Endothelial cell of umbilical vein (primary cell): ENCODE measurements at regions of chr7 and their contacts with region 1.

Region 1: DNA sequence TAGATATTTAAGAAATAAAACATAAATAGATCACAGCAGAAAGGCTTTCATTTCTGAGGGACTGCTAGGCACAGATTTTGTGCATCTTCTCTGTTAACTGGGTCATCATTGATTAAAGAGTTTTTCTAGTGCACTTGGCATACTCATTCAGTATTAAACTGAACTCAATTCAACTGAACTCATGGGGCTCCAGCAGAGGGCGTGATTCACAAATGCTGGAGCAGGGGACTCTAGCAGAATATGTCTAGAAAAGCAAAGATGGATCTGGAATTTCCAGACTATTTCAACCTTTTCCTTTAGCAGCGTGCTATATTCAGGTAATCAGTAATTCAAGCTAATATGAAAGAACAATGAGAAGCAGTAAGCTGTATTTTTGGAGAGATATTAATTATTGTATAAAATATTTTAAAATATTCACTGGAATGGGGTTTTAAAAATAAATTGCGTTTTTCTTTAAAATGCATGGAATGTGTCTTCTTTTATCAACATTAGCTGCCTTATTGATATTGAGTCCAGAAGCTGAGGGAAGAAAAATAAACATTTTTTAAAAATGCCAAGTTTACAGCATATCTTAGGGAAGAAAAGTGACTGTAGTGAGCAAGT is 296.8 kb upstream of the CACNA2D1 start:
- DNase-seq: peak; percentile 51
- H3K4me3 ChIP-seq: no peak overlapping the region
- H3K27ac ChIP-seq: no peak overlapping the region
- H3K4me1 ChIP-seq: no peaks in the 10 kb centered on the region
- H3K27me3 ChIP-seq: no peaks in the 10 kb centered on the region
- CTCF ChIP-seq: peak; percentile 64 to 74
- POLR2A ChIP-seq: no peak

Region 2: DNA sequence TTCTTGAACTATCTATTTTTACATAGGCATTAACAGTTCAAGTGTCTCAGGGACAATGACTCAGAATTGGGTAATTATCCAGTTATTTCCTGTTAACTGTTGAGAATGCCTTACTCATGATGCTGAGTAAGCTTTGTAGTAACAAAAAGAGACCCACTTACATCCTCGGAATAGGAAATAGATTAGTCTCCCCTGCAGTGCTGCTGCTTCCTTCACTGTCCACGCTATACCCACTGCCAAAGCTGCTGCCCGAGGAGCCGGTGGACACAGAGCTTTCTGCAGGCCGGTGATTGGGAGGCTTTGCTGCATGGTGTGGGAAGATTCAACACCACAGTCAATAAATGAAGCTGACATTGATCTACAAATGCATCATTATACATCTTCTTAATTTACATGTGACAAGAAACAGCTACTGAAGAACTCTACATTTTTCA is 65.2 kb after region 1 on chr7:
- CTCF ChIA-PET with region 1: interaction called, 7 read pairs
- POLR2A ChIA-PET with region 1: no interaction called
- dilution Hi-C with region 1: no loop called
- intact Hi-C with region 1: loop called (anchors 2 kb)
- DNase-seq: peak; percentile 89
- H3K4me3 ChIP-seq: peak overlapping the region in 1 of 3 experiments; percentile 55
- H3K27ac ChIP-seq: peak overlapping the region; percentile 76
- H3K4me1 ChIP-seq: peaks cover 13% of the 10 kb centered on the region
- H3K27me3 ChIP-seq: no peaks in the 10 kb centered on the region
- CTCF ChIP-seq: no peak
- POLR2A ChIP-seq: no peak

Region 3: DNA sequence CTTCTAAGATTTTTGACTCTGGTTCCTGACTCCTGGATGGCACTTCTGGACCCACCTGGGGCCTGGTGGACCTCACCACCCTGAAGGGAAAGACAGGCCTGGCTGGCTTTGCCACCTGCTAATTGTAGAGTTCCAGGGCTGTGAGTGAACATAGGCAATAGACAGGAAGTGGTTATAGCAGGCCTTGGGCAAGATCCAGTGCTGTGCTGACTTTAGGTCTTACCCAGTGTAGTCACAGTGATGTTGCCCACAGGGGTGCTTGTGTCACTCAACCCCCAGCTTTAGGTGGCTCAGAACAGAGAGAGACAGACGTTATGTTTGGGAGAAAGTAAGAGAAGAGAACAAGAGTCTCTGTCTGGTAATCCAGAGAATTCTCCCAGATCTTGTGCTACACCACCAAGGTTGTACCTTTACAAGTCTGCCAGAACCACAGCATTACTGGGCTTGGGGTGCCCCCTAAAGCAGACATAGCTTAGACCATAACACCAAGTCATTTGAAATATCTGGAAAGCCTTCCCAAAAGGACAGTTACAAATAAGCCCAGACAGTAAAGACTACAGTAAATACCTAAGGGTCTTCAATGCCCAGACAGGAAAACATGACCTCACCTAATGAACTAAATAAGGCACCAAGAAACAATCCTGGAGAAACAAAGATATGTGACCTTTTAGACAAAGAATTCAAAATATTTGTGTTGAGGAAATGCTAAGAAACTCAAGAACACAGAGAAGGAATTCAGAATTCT is 118.9 kb after region 1 on chr7:
- CTCF ChIA-PET with region 1: interaction called, 4 read pairs
- POLR2A ChIA-PET with region 1: no interaction called
- dilution Hi-C with region 1: no loop called
- intact Hi-C with region 1: loop called (anchors 1 kb)
- DNase-seq: peak; percentile 65
- H3K4me3 ChIP-seq: no peak overlapping the region
- H3K27ac ChIP-seq: peak overlapping the region; percentile 98
- H3K4me1 ChIP-seq: peaks cover 18% of the 10 kb centered on the region
- H3K27me3 ChIP-seq: no peaks in the 10 kb centered on the region
- CTCF ChIP-seq: no peak
- POLR2A ChIP-seq: no peak

Region 4: GRCh38 chr7:83072576-83073517 is 332.5 kb after region 1 on chr7:
- CTCF ChIA-PET with region 1: interaction called, 12 read pairs
- POLR2A ChIA-PET with region 1: no interaction called
- dilution Hi-C with region 1: no loop called
- intact Hi-C with region 1: loop called (anchors 1 kb)
- DNase-seq: no peak
- H3K4me3 ChIP-seq: no peak overlapping the region
- H3K27ac ChIP-seq: no peak overlapping the region
- H3K4me1 ChIP-seq: no peaks in the 10 kb centered on the region
- H3K27me3 ChIP-seq: no peaks in the 10 kb centered on the region
- CTCF ChIP-seq: no peak
- POLR2A ChIP-seq: no peak

Region 5: DNA sequence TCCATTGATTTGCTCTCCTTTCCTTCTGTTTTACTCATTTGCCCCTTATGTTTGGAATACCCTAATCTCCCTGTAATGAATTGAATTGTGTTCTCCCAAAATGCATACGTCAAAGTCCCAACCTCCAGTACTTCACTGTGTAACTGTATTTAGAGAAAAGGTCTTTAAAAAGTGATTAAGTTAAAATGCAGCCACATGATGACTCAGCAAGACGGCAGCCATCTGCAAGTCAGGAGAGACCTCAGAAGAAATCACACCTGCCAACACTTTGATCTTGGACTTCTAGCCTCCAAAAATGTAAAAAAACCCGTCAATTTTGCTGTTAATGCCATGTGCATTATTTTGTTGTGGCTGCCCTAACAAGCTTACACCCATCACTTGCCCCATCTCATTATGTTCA is 507.7 kb after region 1 on chr7:
- CTCF ChIA-PET with region 1: no interaction called
- POLR2A ChIA-PET with region 1: no interaction called
- dilution Hi-C with region 1: no loop called
- intact Hi-C with region 1: no loop called
- DNase-seq: no peak
- H3K4me3 ChIP-seq: no peak overlapping the region
- H3K27ac ChIP-seq: no peak overlapping the region
- H3K4me1 ChIP-seq: no peaks in the 10 kb centered on the region
- H3K27me3 ChIP-seq: no peaks in the 10 kb centered on the region
- CTCF ChIP-seq: no peak
- POLR2A ChIP-seq: no peak

Region 6: GRCh38 chr7:83271212-83272099 is 531.1 kb after region 1 on chr7:
- CTCF ChIA-PET with region 1: interaction called, 18 read pairs
- POLR2A ChIA-PET with region 1: no interaction called
- dilution Hi-C with region 1: no loop called
- intact Hi-C with region 1: loop called (anchors 1 kb)
- DNase-seq: peak; percentile 55
- H3K4me3 ChIP-seq: no peak overlapping the region
- H3K27ac ChIP-seq: no peak overlapping the region
- H3K4me1 ChIP-seq: no peaks in the 10 kb centered on the region
- H3K27me3 ChIP-seq: no peaks in the 10 kb centered on the region
- CTCF ChIP-seq: peak in 1 of 2 donors; percentile 23
- POLR2A ChIP-seq: no peak

Region 7: DNA sequence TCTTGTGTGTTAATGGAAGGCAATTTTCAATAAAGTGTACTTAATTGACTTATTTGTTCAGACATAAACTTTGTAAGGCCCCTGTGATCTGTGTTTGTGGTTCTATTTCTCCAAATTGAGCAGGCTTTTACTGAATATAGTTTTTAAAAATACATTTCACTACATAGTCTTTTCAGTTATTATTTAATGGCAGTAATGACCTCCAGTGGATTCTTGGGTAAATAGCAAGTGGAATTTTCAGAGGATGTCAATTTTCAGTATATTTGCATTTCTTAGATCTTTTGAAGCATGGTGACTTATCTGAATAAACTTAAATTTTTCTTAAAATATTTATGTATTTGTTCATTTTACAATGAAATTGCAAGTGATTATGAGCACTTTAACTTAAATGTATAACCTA is 625.4 kb after region 1 on chr7:
- CTCF ChIA-PET with region 1: no interaction called
- POLR2A ChIA-PET with region 1: no interaction called
- dilution Hi-C with region 1: no loop called
- intact Hi-C with region 1: loop called (anchors 1 kb)
- DNase-seq: peak; percentile 13
- H3K4me3 ChIP-seq: no peak overlapping the region
- H3K27ac ChIP-seq: no peak overlapping the region
- H3K4me1 ChIP-seq: no peaks in the 10 kb centered on the region
- H3K27me3 ChIP-seq: peaks cover 0 to 6% of the 10 kb centered on the region in 2 experiments
- CTCF ChIP-seq: no peak
- POLR2A ChIP-seq: no peak

Region 8: GRCh38 chr7:83655951-83656556 is 915.7 kb after region 1 on chr7:
- CTCF ChIA-PET with region 1: no interaction called
- POLR2A ChIA-PET with region 1: no interaction called
- dilution Hi-C with region 1: no loop called
- intact Hi-C with region 1: loop called (anchors 5 kb)
- DNase-seq: peak; percentile 64
- H3K4me3 ChIP-seq: no peak overlapping the region
- H3K27ac ChIP-seq: no peak overlapping the region
- H3K4me1 ChIP-seq: no peaks in the 10 kb centered on the region
- H3K27me3 ChIP-seq: peaks cover 10 to 14% of the 10 kb centered on the region in 2 experiments
- CTCF ChIP-seq: peak; percentile 52 to 64
- POLR2A ChIP-seq: no peak